ENCODE measurements at regions of chr13 and their contacts with region 1.

Region 1: GRCh38 chr13:21759911-21760310 is 89.0 kb downstream of the FGF9 start:
- DNase-seq: no peak
- ATAC-seq: no peak
- H3K4me3 ChIP-seq: no peak overlapping the region
- H3K27ac ChIP-seq: no peak overlapping the region
- H3K4me1 ChIP-seq: no peaks in the 10 kb centered on the region
- H3K27me3 ChIP-seq: no peaks in the 10 kb centered on the region
- CTCF ChIP-seq: no peak
- POLR2A ChIP-seq: no peak

Region 2: GRCh38 chr13:21670883-21671619 is 88.9 kb before region 1 on chr13 and contains the start of gene FGF9:
- in situ Hi-C with region 1: no loop called
- intact Hi-C with region 1: loop called (anchors 5 kb)
- DNase-seq: peak; percentile 34 to 59
- ATAC-seq: peak; percentile 63 to 68
- H3K4me3 ChIP-seq: peak within 1 kb of the TSS; percentile 58 to 64 (median 62)
- H3K27ac ChIP-seq: peak within 1 kb of the TSS; percentile 3 to 76 (median 57)
- H3K4me1 ChIP-seq: peaks cover 24 to 36% of the 10 kb centered on the region in 2 donors
- H3K27me3 ChIP-seq: peaks cover 11 to 35% (median 29%) of the 10 kb centered on the region in 3 donors
- CTCF ChIP-seq: peak in 1 of 5 experiments; percentile 20
- POLR2A ChIP-seq: peak; percentile 79 to 90
- total RNA-seq, gene FGF9: 0.16 to 0.38 (median 0.25) TPM in 3 of 4 donors, not detected in the other

Region 3: GRCh38 chr13:21849323-21849722 is 89.4 kb after region 1 on chr13:
- in situ Hi-C with region 1: no loop called
- intact Hi-C with region 1: no loop called
- DNase-seq: no peak
- ATAC-seq: no peak
- H3K4me3 ChIP-seq: no peak overlapping the region
- H3K27ac ChIP-seq: no peak overlapping the region
- H3K4me1 ChIP-seq: no peaks in the 10 kb centered on the region
- H3K27me3 ChIP-seq: no peaks in the 10 kb centered on the region
- CTCF ChIP-seq: peak in 4 of 5 experiments; percentile 10 to 39 (median 17)
- POLR2A ChIP-seq: no peak